Gastrocnemius medialis (tissue), 4 donors: ENCODE measurements at regions of chr2 and their contacts with region 1.

Region 1: GRCh38 chr2:192162392-192163042 is 32.2 kb downstream of the TMEFF2 start:
- DNase-seq: peak; percentile 4 to 18
- ATAC-seq: no peak
- H3K4me3 ChIP-seq: peak overlapping the region in 2 of 4 donors; percentile 19 to 28
- H3K27ac ChIP-seq: no peak overlapping the region
- H3K4me1 ChIP-seq: no peaks in the 10 kb centered on the region
- H3K27me3 ChIP-seq: peaks cover 0 to 3% (median 0%) of the 10 kb centered on the region in 3 donors
- CTCF ChIP-seq: peak; percentile 78 to 92 (median 83)
- POLR2A ChIP-seq: no peak

Region 2: DNA sequence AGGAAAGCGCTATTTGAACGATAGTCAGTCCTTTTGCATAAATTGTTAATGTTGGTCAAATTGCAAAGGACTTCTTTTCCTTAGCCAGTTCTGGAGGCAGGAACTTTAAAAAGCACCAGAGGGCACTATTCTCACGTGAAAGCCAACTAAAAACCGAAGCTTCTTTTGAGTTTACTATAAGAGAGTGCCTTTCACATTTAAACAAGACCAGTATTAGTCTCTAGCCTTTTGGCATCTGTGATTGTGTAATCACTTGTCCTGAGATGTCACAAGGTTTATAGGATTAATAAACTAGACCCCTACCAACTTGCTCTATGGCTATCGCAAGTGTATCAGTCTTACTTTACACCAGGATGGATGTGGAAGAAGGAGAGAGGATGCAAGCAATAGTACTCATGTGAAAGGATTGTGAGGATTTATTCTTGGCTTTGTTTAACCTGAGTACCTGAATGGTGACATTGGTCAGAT is 997.3 kb before region 1 on chr2:
- in situ Hi-C with region 1: loop called in 1 of 4 experiments (anchors 25 kb)
- intact Hi-C with region 1: no loop called
- DNase-seq: no peak
- ATAC-seq: peak; percentile 69 to 77
- H3K4me3 ChIP-seq: peak overlapping the region in 1 of 4 donors; percentile 38
- H3K27ac ChIP-seq: no peak overlapping the region
- H3K4me1 ChIP-seq: peaks cover 19 to 23% of the 10 kb centered on the region in 2 donors
- H3K27me3 ChIP-seq: no peaks in the 10 kb centered on the region
- CTCF ChIP-seq: peak in 4 of 5 experiments; percentile 22 to 65 (median 55)
- POLR2A ChIP-seq: no peak

Region 3: GRCh38 chr2:191555092-191555742 is 607.3 kb before region 1 on chr2:
- in situ Hi-C with region 1: loop called (anchors 5 to 10 kb)
- intact Hi-C with region 1: loop called (anchors 2 kb)
- DNase-seq: peak; percentile 55 to 62
- ATAC-seq: peak; percentile 94 to 96
- H3K4me3 ChIP-seq: no peak overlapping the region
- H3K27ac ChIP-seq: no peak overlapping the region
- H3K4me1 ChIP-seq: no peaks in the 10 kb centered on the region
- H3K27me3 ChIP-seq: no peaks in the 10 kb centered on the region
- CTCF ChIP-seq: peak; percentile 57 to 73 (median 64)
- POLR2A ChIP-seq: no peak

Region 4: DNA sequence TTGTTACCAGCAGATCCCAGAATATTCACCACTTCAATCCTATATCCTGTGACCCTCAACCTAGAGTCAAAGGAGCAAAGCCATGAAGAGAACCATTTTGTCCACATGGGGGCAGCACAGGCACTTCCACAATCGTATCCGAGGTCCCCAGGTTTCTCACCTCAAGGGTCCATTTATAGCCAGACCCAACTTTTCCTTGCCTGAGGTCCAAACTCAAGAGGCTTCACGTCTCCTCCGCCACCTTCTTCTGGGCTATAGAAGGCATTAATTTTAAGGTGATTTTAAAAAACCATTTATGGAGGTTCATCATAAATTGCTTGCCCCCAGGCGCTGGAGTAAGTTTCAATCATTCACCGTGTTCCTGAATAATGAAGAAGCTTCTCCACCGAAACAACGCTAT is 596.2 kb before region 1 on chr2:
- in situ Hi-C with region 1: loop called in 1 of 4 experiments (anchors 10 kb)
- intact Hi-C with region 1: no loop called
- DNase-seq: peak; percentile 13 to 41
- ATAC-seq: peak in 1 of 2 donors; percentile 78
- H3K4me3 ChIP-seq: no peak overlapping the region
- H3K27ac ChIP-seq: no peak overlapping the region
- H3K4me1 ChIP-seq: no peaks in the 10 kb centered on the region
- H3K27me3 ChIP-seq: no peaks in the 10 kb centered on the region
- CTCF ChIP-seq: peak; percentile 29 to 78 (median 63)
- POLR2A ChIP-seq: no peak

Region 5: DNA sequence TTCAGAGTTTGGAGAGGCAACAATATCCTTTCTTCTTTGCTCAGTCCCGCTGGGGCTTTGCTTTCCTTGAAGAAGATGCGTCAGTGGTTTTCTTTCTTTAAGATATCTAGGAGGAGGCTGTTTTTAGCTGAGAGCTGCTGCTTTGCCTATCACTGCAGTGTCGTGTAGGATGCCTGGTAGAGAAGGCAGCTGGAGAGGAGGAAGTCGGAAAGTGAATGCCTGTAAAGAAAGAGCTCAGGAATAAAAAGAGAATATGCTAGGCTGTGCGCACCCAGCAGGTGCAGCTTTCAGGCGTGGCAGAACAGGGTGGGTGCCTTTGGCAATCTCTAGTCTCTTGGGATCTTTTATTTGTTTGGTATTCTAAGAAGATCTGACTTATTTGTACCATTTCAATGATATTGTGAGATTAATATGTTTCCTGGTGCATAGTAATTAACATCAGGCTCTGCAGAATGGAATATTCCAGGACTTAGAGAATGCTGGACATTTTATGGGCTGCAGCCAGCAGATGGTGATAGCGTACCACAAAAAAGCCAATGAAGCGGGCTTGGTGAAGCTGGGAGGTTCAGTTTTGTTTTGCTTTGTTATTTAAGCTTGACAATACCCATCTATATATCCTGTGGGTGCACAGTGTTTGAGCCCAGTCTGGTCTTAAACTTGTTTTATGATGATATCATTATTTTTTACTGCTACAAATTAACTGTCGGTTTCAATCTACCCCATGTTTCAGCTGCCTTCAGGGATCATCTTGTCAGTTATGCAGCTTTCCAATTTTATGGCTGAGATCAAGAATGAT is 350.5 kb before region 1 on chr2:
- in situ Hi-C with region 1: loop called (anchors 5 to 10 kb)
- intact Hi-C with region 1: loop called (anchors 1 kb)
- DNase-seq: peak in 1 of 2 donors; percentile 22
- ATAC-seq: peak; percentile 42 to 62
- H3K4me3 ChIP-seq: peak overlapping the region in 2 of 4 donors; percentile 17 to 29
- H3K27ac ChIP-seq: no peak overlapping the region
- H3K4me1 ChIP-seq: no peaks in the 10 kb centered on the region
- H3K27me3 ChIP-seq: no peaks in the 10 kb centered on the region
- CTCF ChIP-seq: peak; percentile 21 to 71 (median 62)
- POLR2A ChIP-seq: no peak

Region 6: DNA sequence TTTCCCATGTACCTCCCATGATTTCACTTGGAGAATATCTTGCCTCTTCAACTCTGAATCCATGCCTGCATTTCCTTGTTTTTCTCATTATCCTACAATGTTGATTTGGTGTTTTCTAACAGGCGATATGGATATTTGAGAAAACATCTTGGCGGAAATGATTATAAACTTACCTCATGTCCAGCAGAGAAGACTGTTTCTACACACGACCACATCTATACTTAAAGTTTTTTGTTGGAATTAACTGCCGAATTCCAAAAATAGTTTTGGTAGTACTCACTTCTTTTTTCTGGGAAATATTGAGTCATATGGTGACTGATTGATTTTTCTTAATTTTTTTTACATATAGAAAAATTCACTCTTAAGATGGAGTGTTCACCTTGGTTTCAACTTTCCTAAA is 73.6 kb after region 1 on chr2:
- in situ Hi-C with region 1: no loop called
- intact Hi-C with region 1: no loop called
- DNase-seq: no peak
- ATAC-seq: no peak
- H3K4me3 ChIP-seq: no peak overlapping the region
- H3K27ac ChIP-seq: no peak overlapping the region
- H3K4me1 ChIP-seq: no peaks in the 10 kb centered on the region
- H3K27me3 ChIP-seq: no peaks in the 10 kb centered on the region
- CTCF ChIP-seq: no peak
- POLR2A ChIP-seq: no peak

Region 7: DNA sequence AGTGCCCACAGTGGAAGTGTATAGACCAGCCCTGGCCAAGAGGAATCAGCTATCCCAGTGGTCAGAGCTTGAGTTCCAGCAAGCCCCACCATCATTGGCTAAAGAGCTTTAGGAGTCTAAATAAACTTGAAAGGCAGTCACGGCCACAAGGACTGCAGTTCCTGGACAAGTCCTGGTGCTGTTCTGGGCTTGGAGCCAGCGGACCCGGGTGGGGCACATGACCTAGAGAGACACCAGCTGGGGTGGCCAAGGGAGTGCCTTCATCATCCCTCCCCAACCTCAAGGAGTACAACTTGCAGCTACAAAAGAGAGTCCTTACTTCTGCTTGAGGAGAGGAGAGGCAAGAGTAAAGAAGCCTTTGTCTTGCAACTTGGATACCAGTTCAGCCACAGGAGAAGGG is 472.0 kb after region 1 on chr2:
- in situ Hi-C with region 1: no loop called
- intact Hi-C with region 1: no loop called
- DNase-seq: no peak
- ATAC-seq: no peak
- H3K4me3 ChIP-seq: no peak overlapping the region
- H3K27ac ChIP-seq: no peak overlapping the region
- H3K4me1 ChIP-seq: no peaks in the 10 kb centered on the region
- H3K27me3 ChIP-seq: no peaks in the 10 kb centered on the region
- CTCF ChIP-seq: no peak
- POLR2A ChIP-seq: no peak